ENCODE measurements at regions of chr4 and their contacts with region 1.

Region 1: GRCh38 chr4:106369456-106370060 is 980 bp upstream of the GIMD1 start:
- DNase-seq: peak; percentile 62 to 67
- H3K4me3 ChIP-seq: no peak overlapping the region
- H3K4me3 Mint-ChIP-seq: no peak overlapping the region
- H3K27ac Mint-ChIP-seq: peak overlapping the region; percentile 64
- H3K4me1 ChIP-seq: peaks cover 23% of the 10 kb centered on the region
- H3K4me1 Mint-ChIP-seq: peaks cover 14% of the 10 kb centered on the region
- H3K27me3 ChIP-seq: no peaks in the 10 kb centered on the region
- H3K27me3 Mint-ChIP-seq: no peaks in the 10 kb centered on the region
- CTCF ChIP-seq: peak; percentile 65 to 80

Region 2: GRCh38 chr4:105765690-105766407 is 603.7 kb before region 1 on chr4:
- CTCF ChIA-PET with region 1: no interaction called
- POLR2A ChIA-PET with region 1: no interaction called
- intact Hi-C with region 1: no loop called
- DNase-seq: no peak
- H3K4me3 ChIP-seq: no peak overlapping the region
- H3K4me3 Mint-ChIP-seq: no peak overlapping the region
- H3K27ac Mint-ChIP-seq: no peak overlapping the region
- H3K4me1 ChIP-seq: no peaks in the 10 kb centered on the region
- H3K4me1 Mint-ChIP-seq: no peaks in the 10 kb centered on the region
- H3K27me3 ChIP-seq: no peaks in the 10 kb centered on the region
- H3K27me3 Mint-ChIP-seq: no peaks in the 10 kb centered on the region
- CTCF ChIP-seq: no peak

Region 3: GRCh38 chr4:106502106-106502699 is 132.6 kb after region 1 on chr4:
- CTCF ChIA-PET with region 1: no interaction called
- POLR2A ChIA-PET with region 1: no interaction called
- intact Hi-C with region 1: loop called (anchors 1 kb)
- DNase-seq: peak; percentile 28 to 53
- H3K4me3 ChIP-seq: no peak overlapping the region
- H3K4me3 Mint-ChIP-seq: no peak overlapping the region
- H3K27ac Mint-ChIP-seq: no peak overlapping the region
- H3K4me1 ChIP-seq: peaks cover 6% of the 10 kb centered on the region; the same call in 1 of the 2 replicates
- H3K4me1 Mint-ChIP-seq: no peaks in the 10 kb centered on the region
- H3K27me3 ChIP-seq: no peaks in the 10 kb centered on the region
- H3K27me3 Mint-ChIP-seq: no peaks in the 10 kb centered on the region
- CTCF ChIP-seq: peak; percentile 16 to 34

Region 4: GRCh38 chr4:106583567-106583966 is 214.0 kb after region 1 on chr4:
- CTCF ChIA-PET with region 1: no interaction called
- POLR2A ChIA-PET with region 1: no interaction called
- intact Hi-C with region 1: loop called (anchors 10 kb)
- DNase-seq: no peak
- H3K4me3 ChIP-seq: no peak overlapping the region
- H3K4me3 Mint-ChIP-seq: no peak overlapping the region
- H3K27ac Mint-ChIP-seq: peak overlapping the region; percentile 42
- H3K4me1 ChIP-seq: peaks cover 14% of the 10 kb centered on the region
- H3K4me1 Mint-ChIP-seq: peaks cover 12% of the 10 kb centered on the region
- H3K27me3 ChIP-seq: no peaks in the 10 kb centered on the region
- H3K27me3 Mint-ChIP-seq: no peaks in the 10 kb centered on the region
- CTCF ChIP-seq: no peak

Region 5: DNA sequence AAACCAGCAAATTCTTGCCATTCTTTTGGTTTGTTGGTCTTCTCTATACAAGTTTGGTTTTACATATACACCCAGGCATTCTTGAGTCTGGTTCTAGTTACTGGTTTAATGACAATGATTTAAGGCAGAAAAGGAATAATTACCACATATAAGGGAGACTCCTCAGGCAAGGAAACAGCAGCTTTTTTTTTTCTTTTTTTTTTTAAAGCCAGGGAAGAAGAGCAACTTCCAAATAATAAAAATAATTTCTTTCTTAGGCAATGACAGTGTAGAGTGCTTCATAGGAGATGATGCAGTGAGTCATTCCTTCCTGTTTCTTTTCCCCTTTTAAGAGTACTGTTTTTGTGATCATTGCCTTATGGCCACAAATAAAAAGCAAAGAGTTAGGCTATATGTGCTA is 376.9 kb after region 1 on chr4:
- CTCF ChIA-PET with region 1: no interaction called
- POLR2A ChIA-PET with region 1: no interaction called
- intact Hi-C with region 1: loop called (anchors 10 kb)
- DNase-seq: no peak
- H3K4me3 ChIP-seq: no peak overlapping the region
- H3K4me3 Mint-ChIP-seq: no peak overlapping the region
- H3K27ac Mint-ChIP-seq: no peak overlapping the region
- H3K4me1 ChIP-seq: peaks cover 23% of the 10 kb centered on the region
- H3K4me1 Mint-ChIP-seq: peaks cover 7% of the 10 kb centered on the region
- H3K27me3 ChIP-seq: no peaks in the 10 kb centered on the region
- H3K27me3 Mint-ChIP-seq: no peaks in the 10 kb centered on the region
- CTCF ChIP-seq: no peak

Region 6: DNA sequence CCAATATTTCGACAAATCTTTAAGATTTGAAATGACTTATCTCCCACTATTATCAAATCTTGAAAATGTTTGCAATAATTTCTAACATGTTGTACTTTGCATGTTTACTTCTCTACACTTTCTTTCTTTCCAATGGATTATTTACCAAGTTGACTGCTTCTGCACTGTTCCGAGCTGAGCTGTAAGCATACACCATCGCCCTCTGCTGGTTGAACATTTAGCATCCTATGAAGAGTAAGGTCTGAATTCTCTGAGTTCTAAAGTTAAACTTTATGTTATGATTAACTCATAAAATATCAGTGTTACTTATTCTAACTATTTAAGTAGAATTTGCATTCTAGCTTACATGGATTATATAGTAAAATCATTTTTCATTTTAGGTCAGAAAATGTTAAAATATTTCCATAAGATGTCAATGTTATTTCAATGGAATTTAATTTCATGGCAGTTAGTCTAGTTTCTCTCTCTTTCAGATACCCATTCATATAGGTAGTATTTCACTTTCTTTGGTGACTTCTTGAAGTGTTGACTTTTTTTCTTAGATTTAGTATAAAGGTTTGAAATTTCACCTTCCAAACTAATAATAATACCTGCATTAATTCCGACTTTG is 529.2 kb after region 1 on chr4:
- CTCF ChIA-PET with region 1: interaction called, 3 read pairs
- POLR2A ChIA-PET with region 1: no interaction called
- intact Hi-C with region 1: loop called (anchors 1 kb)
- DNase-seq: peak; percentile 38 to 57
- H3K4me3 ChIP-seq: no peak overlapping the region
- H3K4me3 Mint-ChIP-seq: no peak overlapping the region
- H3K27ac Mint-ChIP-seq: no peak overlapping the region
- H3K4me1 ChIP-seq: no peaks in the 10 kb centered on the region
- H3K4me1 Mint-ChIP-seq: peaks cover 6% of the 10 kb centered on the region
- H3K27me3 ChIP-seq: no peaks in the 10 kb centered on the region
- H3K27me3 Mint-ChIP-seq: peaks cover 4% of the 10 kb centered on the region
- CTCF ChIP-seq: peak; percentile 67 to 68